Mucosa of descending colon (tissue), 3 donors: ENCODE measurements at regions of chr4 and their contacts with region 1.

Region 1: GRCh38 chr4:121950212-121950679 is 1.6 kb downstream of the TRPC3 start:
- DNase-seq: peak; percentile 77 to 89 (median 88)
- ATAC-seq: peak; percentile 85
- H3K4me3 ChIP-seq: no peak overlapping the region
- H3K4me1 ChIP-seq: peaks cover 14% of the 10 kb centered on the region
- CTCF ChIP-seq: peak; percentile 67

Region 2: DNA sequence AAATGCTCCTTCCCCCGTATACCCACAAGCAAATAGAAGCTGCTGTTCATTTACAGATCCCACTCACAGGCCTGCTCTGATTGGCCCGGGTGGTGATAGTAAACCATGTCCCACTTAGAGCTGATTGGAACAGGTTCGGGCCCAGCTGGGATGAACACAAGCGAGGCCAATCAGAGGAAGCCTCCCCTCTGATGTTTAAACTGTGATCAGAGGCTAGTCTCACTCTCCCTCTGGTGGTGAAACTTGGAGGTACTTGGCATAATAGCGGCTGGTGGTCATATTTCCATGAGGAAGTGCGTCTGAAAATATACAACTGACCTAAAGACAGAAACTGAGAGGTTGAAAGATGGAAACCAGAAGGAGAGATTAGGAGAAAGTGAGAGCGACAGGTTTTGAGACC is 53.1 kb after region 1 on chr4:
- intact Hi-C with region 1: loop called in 1 of 2 experiments (anchors 2 kb)
- DNase-seq: peak in 2 of 3 donors; percentile 21 to 86
- ATAC-seq: peak; percentile 79
- H3K4me3 ChIP-seq: no peak overlapping the region
- H3K4me1 ChIP-seq: no peaks in the 10 kb centered on the region
- CTCF ChIP-seq: peak; percentile 17

Region 3: GRCh38 chr4:122246551-122246950 is 296.3 kb after region 1 on chr4:
- intact Hi-C with region 1: loop called in 1 of 2 experiments (anchors 10 kb)
- DNase-seq: no peak
- ATAC-seq: no peak
- H3K4me3 ChIP-seq: no peak overlapping the region
- H3K4me1 ChIP-seq: no peaks in the 10 kb centered on the region
- CTCF ChIP-seq: no peak